ENCODE measurements at regions of chr16 and their contacts with region 1.

Region 1: GRCh38 chr16:1964506-1965395 is at the start of gene RPS2:
- DNase-seq: peak; percentile 99
- ATAC-seq: peak; percentile 87
- H3K4me3 Mint-ChIP-seq: peak within 1 kb of the TSS; percentile 98
- H3K27ac Mint-ChIP-seq: peak within 1 kb of the TSS; percentile 96
- H3K4me1 Mint-ChIP-seq: peaks cover 33% of the 10 kb centered on the region
- H3K27me3 Mint-ChIP-seq: no peaks in the 10 kb centered on the region
- CTCF ChIP-seq: no peak
- total RNA-seq, gene RPS2: 5,572 to 5,598 TPM

Region 2: DNA sequence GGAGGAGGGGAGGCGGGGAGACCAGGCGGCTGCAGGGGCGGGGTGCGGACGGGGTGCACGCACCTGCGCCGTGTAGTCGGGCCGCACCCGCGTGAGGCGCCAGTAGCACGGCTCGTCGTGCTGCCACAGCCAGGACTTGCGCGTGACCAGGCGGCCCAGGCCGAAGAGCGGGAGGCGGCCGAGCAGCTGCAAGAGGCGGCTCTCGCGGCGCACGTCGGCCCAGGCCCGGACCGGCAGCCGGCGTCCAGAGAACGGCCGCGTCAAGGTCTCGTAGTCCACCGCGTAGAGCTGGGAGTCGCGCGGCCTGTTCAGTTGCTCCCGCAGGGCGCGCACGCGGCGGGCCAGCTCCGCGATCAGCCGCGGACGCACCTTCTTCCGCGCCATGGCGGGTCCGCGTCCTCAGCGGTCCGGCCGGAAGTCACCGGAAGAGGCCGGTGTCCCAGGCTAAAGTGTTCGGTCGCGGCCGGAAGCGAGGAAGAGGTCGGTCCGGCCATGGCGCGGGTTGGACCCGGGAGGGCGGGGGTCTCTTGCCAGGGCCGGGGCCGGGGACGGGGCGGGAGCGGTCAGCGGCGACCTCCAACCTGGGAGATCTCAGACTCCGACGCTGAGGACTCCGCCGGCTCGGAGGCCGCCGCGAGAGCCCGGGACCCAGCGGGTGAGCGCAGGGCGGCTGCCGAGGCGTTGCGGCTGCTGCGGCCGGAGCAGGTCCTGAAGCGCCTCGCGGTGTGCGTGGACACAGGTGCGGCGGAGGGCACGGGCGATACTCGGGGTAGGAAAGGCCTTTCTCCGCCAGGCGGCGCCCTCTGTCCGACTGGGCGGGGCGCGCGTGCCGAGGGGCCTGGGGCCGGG is 191.8 kb before region 1 on chr16 and contains the starts of genes EME2 and MRPS34:
- CTCF ChIA-PET with region 1: no interaction called
- POLR2A ChIA-PET with region 1: interaction called, 10 read pairs
- intact Hi-C with region 1: no loop called
- DNase-seq: peak; percentile 84
- ATAC-seq: peak; percentile 63
- H3K4me3 Mint-ChIP-seq: peak within 1 kb of the TSS; percentile 100
- H3K27ac Mint-ChIP-seq: peak within 1 kb of the TSS; percentile 99
- H3K4me1 Mint-ChIP-seq: peaks cover 14% of the 10 kb centered on the region
- H3K27me3 Mint-ChIP-seq: no peaks in the 10 kb centered on the region
- CTCF ChIP-seq: peak; percentile 97
- total RNA-seq, gene EME2: 15.5 to 15.6 TPM
- total RNA-seq, gene MRPS34: 175 to 193 TPM

Region 3: GRCh38 chr16:1942810-1943726 is 21.7 kb before region 1 on chr16 and contains the start of gene MSRB1:
- CTCF ChIA-PET with region 1: interaction called, 3 read pairs
- POLR2A ChIA-PET with region 1: interaction called, 113 read pairs
- intact Hi-C with region 1: no loop called
- DNase-seq: peak; percentile 100
- ATAC-seq: peak; percentile 99
- H3K4me3 Mint-ChIP-seq: peak within 1 kb of the TSS; percentile 82
- H3K27ac Mint-ChIP-seq: peak within 1 kb of the TSS; percentile 86
- H3K4me1 Mint-ChIP-seq: peaks cover 23% of the 10 kb centered on the region
- H3K27me3 Mint-ChIP-seq: no peaks in the 10 kb centered on the region
- CTCF ChIP-seq: no peak
- total RNA-seq, gene MSRB1: 15.5 to 18.1 TPM

Region 4: DNA sequence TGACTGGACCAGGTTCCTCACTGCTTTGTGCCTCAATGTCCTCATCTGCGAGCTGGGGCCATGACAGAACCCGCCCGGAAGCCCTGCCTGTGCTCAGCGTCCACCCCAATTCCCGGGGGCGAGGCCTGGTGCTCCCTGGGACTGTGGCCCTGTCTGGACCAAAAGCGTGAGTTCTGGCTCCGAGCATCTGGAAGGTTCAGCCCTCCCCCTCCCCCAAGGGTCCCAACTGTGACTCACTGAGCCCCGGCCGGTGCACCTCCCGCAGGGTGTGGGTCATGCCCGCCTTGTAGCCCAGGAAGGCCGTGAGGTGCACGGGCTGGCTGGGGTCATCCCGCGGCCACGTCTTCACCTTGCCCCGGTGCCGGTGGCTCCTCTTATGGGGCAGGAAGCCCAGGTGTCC is 11.0 kb before region 1 on chr16:
- CTCF ChIA-PET with region 1: no interaction called
- POLR2A ChIA-PET with region 1: interaction called, 505 read pairs
- intact Hi-C with region 1: no loop called
- DNase-seq: no peak
- ATAC-seq: no peak
- H3K4me3 Mint-ChIP-seq: no peak overlapping the region
- H3K27ac Mint-ChIP-seq: no peak overlapping the region
- H3K4me1 Mint-ChIP-seq: peaks cover 2% of the 10 kb centered on the region
- H3K27me3 Mint-ChIP-seq: no peaks in the 10 kb centered on the region
- CTCF ChIP-seq: no peak

Region 5: GRCh38 chr16:1983544-1984346 is 19.0 kb after region 1 on chr16 and contains the start of gene GFER:
- CTCF ChIA-PET with region 1: interaction called, 4 read pairs
- POLR2A ChIA-PET with region 1: interaction called, 505 read pairs
- intact Hi-C with region 1: no loop called
- DNase-seq: peak; percentile 82
- ATAC-seq: peak; percentile 92
- H3K4me3 Mint-ChIP-seq: peak within 1 kb of the TSS; percentile 89
- H3K27ac Mint-ChIP-seq: peak within 1 kb of the TSS; percentile 30
- H3K4me1 Mint-ChIP-seq: peaks cover 20% of the 10 kb centered on the region
- H3K27me3 Mint-ChIP-seq: peaks cover 36% of the 10 kb centered on the region
- CTCF ChIP-seq: peak; percentile 22
- total RNA-seq, gene GFER: 33.5 to 33.9 TPM

Region 6: GRCh38 chr16:2023098-2023925 is 58.6 kb after region 1 on chr16:
- CTCF ChIA-PET with region 1: no interaction called
- POLR2A ChIA-PET with region 1: interaction called, 20 read pairs
- intact Hi-C with region 1: no loop called
- DNase-seq: peak; percentile 95
- ATAC-seq: peak; percentile 89
- H3K4me3 Mint-ChIP-seq: peak overlapping the region; percentile 49
- H3K27ac Mint-ChIP-seq: no peak overlapping the region
- H3K4me1 Mint-ChIP-seq: peaks cover 24% of the 10 kb centered on the region
- H3K27me3 Mint-ChIP-seq: peaks cover 29% of the 10 kb centered on the region
- CTCF ChIP-seq: peak; percentile 97